Head of caudate nucleus (tissue), 42 donors: ENCODE measurements at regions of chr17 and their contacts with region 1.

Region 1: GRCh38 chr17:74457146-74457819 is 9.2 kb upstream of the CD300A start:
- DNase-seq: peak; percentile 42 to 95 (median 88)

Region 2: GRCh38 chr17:74206332-74206818 is 250.9 kb before region 1 on chr17:
- intact Hi-C with region 1: loop called (anchors 5 kb)
- DNase-seq: peak in 1 of 42 donors; percentile 30

Region 3: DNA sequence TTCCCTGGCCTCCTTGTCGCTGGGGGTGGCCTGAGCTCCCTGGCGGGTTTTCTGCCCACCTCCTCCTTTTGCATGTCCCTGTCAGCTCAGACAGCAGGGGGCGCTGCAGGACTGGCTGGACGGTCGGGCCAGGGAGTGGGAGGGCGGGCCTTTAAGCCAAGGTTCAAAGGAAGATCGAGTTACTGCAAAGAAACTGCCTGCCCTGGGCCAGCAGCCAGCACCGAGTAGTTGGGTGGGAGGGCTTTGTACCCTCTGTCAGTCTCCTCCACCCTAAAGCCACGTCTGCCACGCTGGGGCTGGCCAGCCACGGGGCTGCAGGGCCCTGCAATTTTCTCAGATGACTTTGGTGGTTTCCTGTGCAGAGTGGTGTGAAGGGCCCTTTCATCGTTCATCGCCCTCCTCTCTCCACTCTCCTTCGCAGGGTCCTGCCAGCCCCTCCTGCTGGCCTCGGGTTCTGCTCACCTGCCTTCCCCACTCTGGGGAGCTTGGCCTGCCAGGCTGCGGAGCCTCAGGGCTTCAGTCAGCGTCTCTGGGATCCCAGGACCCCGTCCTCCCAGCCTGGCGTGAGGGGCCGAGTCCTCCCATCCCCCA is 77.7 kb before region 1 on chr17:
- intact Hi-C with region 1: loop called (anchors 2 kb)
- DNase-seq: peak; percentile 72 to 97 (median 92)

Region 4: GRCh38 chr17:74430706-74431567 is 26.3 kb before region 1 on chr17:
- intact Hi-C with region 1: no loop called
- DNase-seq: peak in 38 of 42 donors; percentile 25 to 84 (median 65)

Region 5: DNA sequence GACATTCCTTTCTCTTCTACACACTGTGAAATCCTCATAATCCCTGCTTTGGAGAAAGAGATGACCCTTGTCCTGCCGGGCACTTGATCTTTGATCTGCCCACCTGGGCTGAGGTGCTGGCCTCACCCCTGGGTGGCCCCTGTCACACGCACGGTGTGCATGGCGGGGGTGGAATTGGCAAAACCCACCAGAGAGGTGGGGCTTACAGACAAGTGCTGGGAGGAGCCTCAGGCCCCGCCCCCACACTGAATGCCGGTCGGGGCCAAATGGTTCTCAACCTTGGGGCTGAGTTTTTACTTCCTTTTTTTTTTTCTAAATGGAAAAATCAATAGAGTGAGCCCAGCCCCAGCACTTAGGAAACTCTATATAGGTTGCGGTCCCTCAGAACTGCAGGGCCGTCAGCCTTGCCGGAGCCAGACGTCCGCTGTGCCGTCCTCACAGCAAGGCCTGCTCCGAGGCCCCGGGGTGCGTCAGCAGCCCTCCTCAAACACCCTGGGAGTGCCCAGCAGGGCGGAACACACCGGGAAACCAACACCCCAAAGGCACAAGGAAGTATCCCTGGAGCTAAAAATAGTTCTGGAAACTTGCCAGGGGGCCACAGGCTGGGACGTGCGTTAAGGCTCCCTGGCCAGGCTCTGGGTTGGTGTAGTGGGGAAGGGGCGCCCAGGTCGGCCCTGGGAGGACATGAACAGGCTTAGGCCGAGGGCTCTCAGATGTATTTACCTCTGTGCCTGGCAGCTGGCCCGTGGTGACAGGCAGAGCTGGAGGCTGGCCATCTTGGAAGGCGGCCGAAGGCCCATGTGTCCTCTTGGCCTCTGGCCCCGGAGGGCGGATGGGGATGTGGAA is 14.4 kb before region 1 on chr17:
- intact Hi-C with region 1: no loop called
- DNase-seq: peak in 41 of 42 donors; percentile 50 to 86 (median 73)